Natural killer cell (primary cell): ENCODE measurements at regions of chr17 and their contacts with region 1.

Region 1: GRCh38 chr17:56939901-56940343 is 20.9 kb downstream of the COIL start:
- DNase-seq: peak in 1 of 2 donors; percentile 76
- ATAC-seq: peak; percentile 74 to 79 (median 75)
- H3K4me3 ChIP-seq: no peak overlapping the region
- H3K4me3 Mint-ChIP-seq: no peak overlapping the region
- H3K27ac ChIP-seq: no peak overlapping the region
- H3K27ac Mint-ChIP-seq: no peak overlapping the region
- H3K4me1 ChIP-seq: no peaks in the 10 kb centered on the region
- H3K4me1 Mint-ChIP-seq: no peaks in the 10 kb centered on the region
- H3K27me3 ChIP-seq: no peaks in the 10 kb centered on the region
- H3K27me3 Mint-ChIP-seq: no peaks in the 10 kb centered on the region
- CTCF ChIP-seq: peak; percentile 72

Region 2: DNA sequence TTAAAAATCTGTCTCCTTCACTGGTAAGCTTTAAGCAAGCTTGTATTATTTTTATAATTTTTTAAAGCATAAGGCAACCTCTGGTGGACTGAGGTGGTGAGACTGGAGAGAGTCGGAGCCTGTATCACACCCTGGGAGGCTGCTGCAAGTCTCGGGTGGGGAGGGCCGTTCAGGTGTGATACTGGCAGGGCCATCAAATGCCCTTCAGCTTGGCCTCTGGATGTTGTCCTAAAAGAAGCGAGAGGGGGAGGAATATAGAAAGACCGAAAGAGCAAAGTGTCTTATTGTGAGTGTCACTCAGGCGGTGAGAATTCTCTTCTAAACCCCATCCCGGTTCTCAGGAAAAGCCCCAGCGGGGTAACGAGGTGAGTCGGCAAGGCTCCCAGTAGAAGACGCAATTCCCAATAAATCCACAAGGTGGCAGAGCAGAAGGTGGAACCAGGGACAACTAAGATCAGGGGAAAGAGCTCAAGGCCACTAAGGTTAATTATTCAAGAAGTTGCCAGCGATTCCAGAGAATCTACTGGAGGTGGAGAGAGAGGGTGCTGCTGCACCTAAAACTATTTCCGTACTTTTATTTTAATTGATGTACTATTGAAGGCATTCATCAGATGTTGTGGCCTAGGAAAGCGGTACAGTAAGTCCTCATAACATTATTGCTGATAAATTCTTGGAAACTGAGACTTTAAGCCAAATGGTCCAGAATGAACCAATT is 120.3 kb before region 1 on chr17:
- intact Hi-C with region 1: loop called (anchors 1 kb)
- DNase-seq: peak; percentile 50 to 87
- ATAC-seq: peak; percentile 81 to 93 (median 83)
- H3K4me3 ChIP-seq: no peak overlapping the region
- H3K4me3 Mint-ChIP-seq: no peak overlapping the region
- H3K27ac ChIP-seq: no peak overlapping the region
- H3K27ac Mint-ChIP-seq: no peak overlapping the region
- H3K4me1 ChIP-seq: peaks cover 4% of the 10 kb centered on the region
- H3K4me1 Mint-ChIP-seq: peaks cover 0 to 6% of the 10 kb centered on the region in 2 donors
- H3K27me3 ChIP-seq: no peaks in the 10 kb centered on the region
- H3K27me3 Mint-ChIP-seq: no peaks in the 10 kb centered on the region
- CTCF ChIP-seq: peak; percentile 86

Region 3: GRCh38 chr17:56838687-56839086 is 101.2 kb before region 1 on chr17:
- intact Hi-C with region 1: no loop called
- DNase-seq: no peak
- ATAC-seq: no peak
- H3K4me3 ChIP-seq: no peak overlapping the region
- H3K4me3 Mint-ChIP-seq: no peak overlapping the region
- H3K27ac ChIP-seq: no peak overlapping the region
- H3K27ac Mint-ChIP-seq: no peak overlapping the region
- H3K4me1 ChIP-seq: peaks cover 8% of the 10 kb centered on the region
- H3K4me1 Mint-ChIP-seq: peaks cover 24 to 26% of the 10 kb centered on the region in 2 donors
- H3K27me3 ChIP-seq: no peaks in the 10 kb centered on the region
- H3K27me3 Mint-ChIP-seq: no peaks in the 10 kb centered on the region
- CTCF ChIP-seq: no peak

Region 4: DNA sequence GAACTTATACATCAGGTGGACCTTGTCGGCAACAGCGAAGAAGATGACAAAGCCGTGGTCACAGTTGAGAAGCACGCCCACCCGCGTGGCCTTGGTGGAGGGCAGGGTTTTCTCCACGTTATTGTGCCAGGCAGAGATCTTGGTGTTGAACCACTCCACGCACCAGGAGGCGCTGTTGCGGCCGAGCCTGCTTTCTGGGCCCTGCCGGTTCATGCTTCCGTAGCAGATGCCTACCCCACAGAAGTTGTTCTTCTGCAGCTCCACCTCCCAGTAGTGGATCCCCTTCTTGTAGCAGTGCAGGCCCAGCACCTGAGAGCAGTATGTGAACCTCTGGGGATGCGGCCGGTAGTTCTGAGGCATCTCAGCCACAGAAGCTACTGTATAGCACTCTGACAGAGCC is 48.1 kb before region 1 on chr17:
- intact Hi-C with region 1: loop called (anchors 1 kb)
- DNase-seq: peak; percentile 52 to 72
- ATAC-seq: peak in 2 of 3 donors; percentile 67 to 78
- H3K4me3 ChIP-seq: no peak overlapping the region
- H3K4me3 Mint-ChIP-seq: no peak overlapping the region
- H3K27ac ChIP-seq: no peak overlapping the region
- H3K27ac Mint-ChIP-seq: no peak overlapping the region
- H3K4me1 ChIP-seq: no peaks in the 10 kb centered on the region
- H3K4me1 Mint-ChIP-seq: peaks cover 0 to 17% of the 10 kb centered on the region in 2 donors
- H3K27me3 ChIP-seq: no peaks in the 10 kb centered on the region
- H3K27me3 Mint-ChIP-seq: no peaks in the 10 kb centered on the region
- CTCF ChIP-seq: peak; percentile 65